ENCODE measurements at regions of chr10 and their contacts with region 1.

Region 1: GRCh38 chr10:88553116-88553752 is 29.9 kb downstream of the RNLS start:
- DNase-seq: peak in 1 of 2 donors; percentile 67
- H3K4me3 ChIP-seq: no peak overlapping the region
- H3K27ac ChIP-seq: no peak overlapping the region
- H3K4me1 ChIP-seq: no peaks in the 10 kb centered on the region
- H3K27me3 ChIP-seq: no peaks in the 10 kb centered on the region
- CTCF ChIP-seq: peak; percentile 64 to 82 (median 69)

Region 2: DNA sequence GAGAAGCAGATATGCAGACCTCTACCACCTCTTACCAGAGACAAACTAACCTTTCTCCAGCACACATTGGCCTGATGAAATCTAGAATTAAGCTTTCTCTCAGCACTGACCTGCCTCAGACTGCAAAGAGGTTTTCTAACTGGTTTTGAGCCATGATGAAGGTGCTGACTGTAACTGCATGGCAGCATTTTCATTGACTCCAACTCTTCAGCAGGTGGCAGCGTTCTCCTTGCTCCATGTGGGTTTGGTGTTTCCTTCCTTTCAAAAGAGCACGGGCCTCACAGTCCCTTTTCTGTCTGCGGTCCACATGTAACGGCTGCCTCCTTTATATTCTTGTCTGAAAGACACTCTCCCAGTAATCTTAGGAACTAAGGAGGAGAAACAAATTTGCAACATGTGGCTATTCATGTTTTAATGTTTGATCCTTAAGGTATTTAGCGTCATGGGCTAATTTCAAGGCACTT is 702.5 kb before region 1 on chr10:
- intact Hi-C with region 1: loop called (anchors 1 kb)
- DNase-seq: peak in 1 of 2 donors; percentile 79
- H3K4me3 ChIP-seq: no peak overlapping the region
- H3K27ac ChIP-seq: no peak overlapping the region
- H3K4me1 ChIP-seq: no peaks in the 10 kb centered on the region
- H3K27me3 ChIP-seq: no peaks in the 10 kb centered on the region
- CTCF ChIP-seq: peak; percentile 63 to 81 (median 67)

Region 3: GRCh38 chr10:88401671-88402347 is 151.4 kb before region 1 on chr10:
- intact Hi-C with region 1: loop called (anchors 5 kb)
- DNase-seq: no peak
- H3K4me3 ChIP-seq: no peak overlapping the region
- H3K27ac ChIP-seq: no peak overlapping the region
- H3K4me1 ChIP-seq: no peaks in the 10 kb centered on the region
- H3K27me3 ChIP-seq: no peaks in the 10 kb centered on the region
- CTCF ChIP-seq: peak in 1 of 3 experiments; percentile 35

Measured in ascending aorta (tissue), 2 donors.